A673 (cell line): ENCODE measurements at regions of chr13 and their contacts with region 1.

Region 1: GRCh38 chr13:48370815-48371214 is 42.1 kb downstream of the LPAR6 start:
- DNase-seq: no peak
- H3K4me3 ChIP-seq: no peak overlapping the region
- H3K27ac ChIP-seq: no peak overlapping the region
- H3K4me1 ChIP-seq: no peaks in the 10 kb centered on the region
- H3K27me3 ChIP-seq: no peaks in the 10 kb centered on the region
- CTCF ChIP-seq: no peak

Region 2: DNA sequence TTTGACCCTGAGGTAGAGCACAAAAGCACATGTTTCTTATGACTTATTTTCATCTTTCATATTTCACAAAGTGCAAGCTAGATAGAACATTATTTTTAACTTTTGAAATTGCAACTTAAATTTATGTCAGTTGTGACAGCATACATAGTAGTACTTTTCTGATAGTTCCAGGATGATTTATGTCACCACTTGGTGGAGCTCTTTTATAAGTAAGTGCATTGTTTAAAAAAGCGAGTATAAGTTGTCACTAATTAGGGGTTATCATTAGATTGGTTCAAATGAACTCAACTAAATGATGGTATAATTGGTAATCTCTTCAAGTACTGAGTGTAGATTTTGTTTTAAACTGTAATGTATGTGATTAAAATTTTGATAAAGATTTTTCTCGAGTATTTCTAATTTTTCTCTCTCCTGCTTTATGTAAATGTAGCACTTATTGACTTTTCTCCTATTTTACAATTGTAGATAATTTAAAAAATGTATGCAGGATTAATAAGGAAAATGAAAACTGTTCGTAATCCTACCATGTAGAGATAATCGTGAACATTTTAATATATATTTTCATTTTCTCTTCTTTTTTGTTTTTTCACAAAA is 36.2 kb before region 1 on chr13:
- CTCF ChIA-PET with region 1: interaction called, 12 read pairs
- POLR2A ChIA-PET with region 1: no interaction called
- intact Hi-C with region 1: no loop called
- DNase-seq: peak; percentile 47
- H3K4me3 ChIP-seq: no peak overlapping the region
- H3K27ac ChIP-seq: no peak overlapping the region
- H3K4me1 ChIP-seq: no peaks in the 10 kb centered on the region
- H3K27me3 ChIP-seq: no peaks in the 10 kb centered on the region
- CTCF ChIP-seq: peak; percentile 72